HEK293 (cell line): ENCODE measurements at regions of chr1 and their contacts with region 1.

Region 1: DNA sequence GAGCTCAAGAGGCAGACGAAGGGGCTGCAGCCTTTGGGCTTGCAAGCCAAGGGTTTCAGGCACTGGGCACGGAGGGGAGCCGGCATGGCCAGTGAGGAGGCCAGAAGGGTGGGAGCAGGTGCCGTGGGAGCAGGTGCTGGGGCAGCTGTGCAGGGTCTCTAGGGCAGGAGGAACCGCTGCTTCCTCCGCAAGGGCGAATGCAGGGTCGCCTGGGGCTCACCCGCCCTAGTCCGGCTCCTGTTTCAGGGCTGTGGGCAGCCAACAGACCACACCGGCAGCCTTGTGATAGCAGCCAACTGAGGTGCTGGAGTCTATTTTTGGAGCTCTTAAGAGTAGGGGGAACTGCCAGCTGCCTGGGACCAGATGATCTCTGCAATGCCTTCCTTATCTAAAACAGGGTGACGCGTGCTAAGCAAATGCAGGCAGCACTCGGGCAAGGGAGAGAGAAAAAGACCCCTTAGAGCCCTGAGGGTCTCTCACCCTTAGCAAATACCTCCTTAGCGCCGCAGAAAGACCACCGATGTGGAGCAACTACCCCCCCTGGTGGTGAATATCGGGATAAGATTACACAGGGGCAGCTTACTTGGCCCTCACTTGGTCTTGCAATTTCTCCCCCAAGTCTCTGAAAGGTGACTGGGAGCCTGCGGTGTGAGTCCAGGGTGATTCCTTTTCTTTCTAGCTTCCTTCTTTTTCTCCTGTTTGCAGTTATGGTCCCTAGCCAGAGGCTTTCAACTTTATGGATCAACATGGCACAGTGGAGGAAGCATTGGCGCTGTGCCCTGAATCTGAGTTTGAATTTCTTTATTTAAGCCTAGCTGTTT is 20.7 kb upstream of the MAPKAPK2 start:
- H3K4me3 ChIP-seq: no peak overlapping the region; the same call in 1 of the 2 replicates
- H3K27ac ChIP-seq: no peak overlapping the region
- H3K4me1 ChIP-seq: no peaks in the 10 kb centered on the region
- CTCF ChIP-seq: peak; percentile 74

Region 2: GRCh38 chr1:206489980-206490770 is 173.9 kb before region 1 on chr1:
- CTCF ChIA-PET with region 1: interaction called, 30 read pairs
- POLR2A ChIA-PET with region 1: no interaction called
- H3K4me3 ChIP-seq: no peak overlapping the region
- H3K27ac ChIP-seq: no peak overlapping the region
- H3K4me1 ChIP-seq: 0 out of 2 replicates have a peak, but pooled peaks cover under 1% of the 10 kb centered on the region
- CTCF ChIP-seq: peak; percentile 94

Region 3: GRCh38 chr1:206612129-206612876 is 51.7 kb before region 1 on chr1 and contains the start of gene EIF2D:
- CTCF ChIA-PET with region 1: interaction called, 61 read pairs
- POLR2A ChIA-PET with region 1: interaction called, 7 read pairs
- H3K4me3 ChIP-seq: peak within 1 kb of the TSS; percentile 69
- H3K27ac ChIP-seq: peak within 1 kb of the TSS; percentile 93
- H3K4me1 ChIP-seq: no peaks in the 10 kb centered on the region
- CTCF ChIP-seq: peak; percentile 99

Region 4: GRCh38 chr1:206651958-206652890 is 11.8 kb before region 1 on chr1:
- CTCF ChIA-PET with region 1: interaction called, 77 read pairs
- POLR2A ChIA-PET with region 1: no interaction called
- H3K4me3 ChIP-seq: no peak overlapping the region
- H3K27ac ChIP-seq: no peak overlapping the region
- H3K4me1 ChIP-seq: peaks cover 8% of the 10 kb centered on the region
- CTCF ChIP-seq: no peak

Region 5: DNA sequence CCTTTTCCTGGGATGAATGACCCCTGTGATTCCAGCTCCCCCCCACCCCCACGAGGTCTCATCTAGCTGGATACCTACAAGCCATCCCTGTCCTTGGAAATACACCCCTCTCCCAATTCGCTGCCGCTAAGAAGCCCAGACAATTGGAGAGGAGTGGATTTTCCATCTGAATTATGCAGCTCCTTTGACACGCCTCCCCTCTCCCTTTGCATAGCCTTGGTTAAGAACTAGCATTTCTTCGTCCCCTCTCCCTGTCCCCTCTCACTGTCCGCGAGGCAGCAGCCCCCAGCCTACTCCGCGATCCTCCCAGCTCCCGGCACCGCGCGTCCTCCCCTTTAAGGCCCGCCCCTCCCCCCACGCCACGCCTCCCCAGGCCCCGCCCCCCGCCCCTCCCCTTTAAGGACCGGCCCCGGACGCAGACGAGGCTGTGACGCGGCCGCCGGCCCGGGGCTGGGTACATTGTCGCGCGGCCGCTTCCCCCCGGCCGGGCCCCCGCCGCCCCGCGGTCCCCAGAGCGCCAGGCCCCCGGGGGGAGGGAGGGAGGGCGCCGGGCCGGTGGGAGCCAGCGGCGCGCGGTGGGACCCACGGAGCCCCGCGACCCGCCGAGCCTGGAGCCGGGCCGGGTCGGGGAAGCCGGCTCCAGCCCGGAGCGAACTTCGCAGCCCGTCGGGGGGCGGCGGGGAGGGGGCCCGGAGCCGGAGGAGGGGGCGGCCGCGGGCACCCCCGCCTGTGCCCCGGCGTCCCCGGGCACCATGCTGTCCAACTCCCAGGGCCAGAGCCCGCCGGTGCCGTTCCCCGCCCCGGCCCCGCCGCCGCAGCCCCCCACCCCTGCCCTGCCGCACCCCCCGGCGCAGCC is 20.7 kb after region 1 on chr1 and contains the start of gene MAPKAPK2:
- CTCF ChIA-PET with region 1: interaction called, 24 read pairs
- POLR2A ChIA-PET with region 1: no interaction called
- H3K4me3 ChIP-seq: peak within 1 kb of the TSS; percentile 73
- H3K27ac ChIP-seq: peak within 1 kb of the TSS; percentile 50
- H3K4me1 ChIP-seq: peaks cover 5% of the 10 kb centered on the region; the same call in 1 of the 2 replicates
- CTCF ChIP-seq: no peak

Region 6: DNA sequence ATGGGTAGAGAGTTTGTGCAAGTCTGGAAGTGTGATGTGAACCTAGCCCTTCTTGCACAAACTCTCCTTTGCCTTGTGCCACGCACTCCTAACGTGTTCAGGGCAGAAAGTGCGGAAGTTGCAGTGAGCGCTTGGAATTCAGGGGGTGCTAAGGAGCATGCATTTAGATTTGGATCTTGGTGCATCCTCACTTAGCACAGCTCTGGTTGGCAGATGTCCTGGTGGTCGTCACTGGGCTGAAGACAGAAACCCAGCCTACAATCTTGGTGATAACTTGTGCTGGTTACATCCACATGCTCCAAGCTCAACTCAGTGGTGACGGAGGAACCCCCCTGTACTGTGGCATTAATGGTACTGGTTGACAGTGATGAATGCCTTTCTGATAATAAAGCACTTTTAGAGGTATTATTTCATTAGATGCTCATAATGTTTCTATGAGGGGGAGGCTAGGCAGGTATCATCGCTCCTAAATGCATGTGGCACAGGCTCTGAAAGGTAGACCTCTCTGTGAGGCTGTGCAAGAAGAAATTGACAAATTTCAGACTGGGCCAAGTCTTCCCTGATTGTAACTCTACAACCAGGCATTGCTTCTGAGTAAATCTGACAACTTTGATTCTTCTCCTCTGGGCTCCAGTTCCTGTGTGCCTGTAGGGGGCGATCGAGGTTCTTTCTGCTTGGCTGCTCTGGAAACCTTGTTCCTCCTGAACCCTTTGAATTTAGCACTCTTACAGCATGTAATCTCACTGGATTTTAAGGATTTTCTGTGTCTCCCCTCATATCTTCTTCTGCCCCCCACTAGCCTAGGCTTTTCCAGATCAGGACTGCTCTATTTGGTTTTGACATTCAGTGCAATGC is 61.3 kb after region 1 on chr1:
- CTCF ChIA-PET with region 1: interaction called, 18 read pairs
- POLR2A ChIA-PET with region 1: no interaction called
- H3K4me3 ChIP-seq: no peak overlapping the region
- H3K27ac ChIP-seq: no peak overlapping the region
- H3K4me1 ChIP-seq: no peaks in the 10 kb centered on the region; the same call in 1 of the 2 replicates
- CTCF ChIP-seq: no peak